OCI-LY7 (cell line): ENCODE measurements at regions of chr5 and their contacts with region 1.

Region 1: GRCh38 chr5:141040771-141041426 is 10.3 kb upstream of the PCDHB1 start:
- DNase-seq: peak; percentile 87
- H3K4me3 ChIP-seq: no peak overlapping the region
- H3K27ac ChIP-seq: no peak overlapping the region
- H3K4me1 ChIP-seq: no peaks in the 10 kb centered on the region
- CTCF ChIP-seq: peak; percentile 88

Region 2: GRCh38 chr5:140840978-140841959 is 199.6 kb before region 1 on chr5 and contains the start of gene PCDHA8:
- CTCF ChIA-PET with region 1: no interaction called
- POLR2A ChIA-PET with region 1: no interaction called
- intact Hi-C with region 1: loop called (anchors 1 kb)
- DNase-seq: peak; percentile 35
- H3K4me3 ChIP-seq: no peak within 1 kb of the TSS
- H3K27ac ChIP-seq: no peak within 1 kb of the TSS
- H3K4me1 ChIP-seq: no peaks in the 10 kb centered on the region
- CTCF ChIP-seq: peak; percentile 77
- total RNA-seq, gene PCDHA8: not detected in 2 replicates

Region 3: GRCh38 chr5:141001466-141001853 is 39.4 kb before region 1 on chr5:
- CTCF ChIA-PET with region 1: no interaction called
- POLR2A ChIA-PET with region 1: no interaction called
- intact Hi-C with region 1: no loop called
- DNase-seq: no peak
- H3K4me3 ChIP-seq: no peak overlapping the region
- H3K27ac ChIP-seq: no peak overlapping the region
- H3K4me1 ChIP-seq: no peaks in the 10 kb centered on the region
- CTCF ChIP-seq: no peak

Region 4: DNA sequence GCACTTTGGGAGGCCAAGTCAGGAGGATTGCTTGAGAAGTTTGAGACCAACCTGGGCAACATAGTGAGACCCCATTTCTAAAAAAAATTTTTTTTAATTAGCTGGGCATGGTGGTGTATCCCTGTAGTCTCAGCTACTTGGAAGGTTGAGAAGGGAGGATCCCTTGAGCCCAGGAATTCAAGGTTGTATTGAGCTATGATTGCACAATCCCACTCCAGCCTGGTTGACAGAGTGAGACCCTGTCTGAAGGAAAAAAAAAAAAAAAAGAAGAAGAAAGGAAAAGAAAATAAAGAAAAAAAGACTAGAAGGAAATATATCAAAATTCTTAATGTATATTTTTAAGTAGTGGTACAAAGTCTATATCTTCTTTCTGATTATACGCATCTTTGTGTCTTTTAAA is 18.5 kb before region 1 on chr5:
- CTCF ChIA-PET with region 1: no interaction called
- POLR2A ChIA-PET with region 1: no interaction called
- intact Hi-C with region 1: no loop called
- DNase-seq: no peak
- H3K4me3 ChIP-seq: no peak overlapping the region
- H3K27ac ChIP-seq: no peak overlapping the region
- H3K4me1 ChIP-seq: no peaks in the 10 kb centered on the region
- CTCF ChIP-seq: no peak

Region 5: GRCh38 chr5:141208478-141208877 is 167.6 kb after region 1 on chr5 and contains the start of gene PCDHB12:
- CTCF ChIA-PET with region 1: no interaction called
- POLR2A ChIA-PET with region 1: no interaction called
- intact Hi-C with region 1: no loop called
- DNase-seq: peak; percentile 19
- H3K4me3 ChIP-seq: no peak within 1 kb of the TSS
- H3K27ac ChIP-seq: no peak within 1 kb of the TSS
- H3K4me1 ChIP-seq: no peaks in the 10 kb centered on the region
- CTCF ChIP-seq: peak; percentile 78
- total RNA-seq, gene PCDHB12: not detected in 2 replicates